SK-N-SH (cell line): ENCODE measurements at regions of chr2 and their contacts with region 1.

Region 1: GRCh38 chr2:84493514-84493913 is 22.8 kb upstream of the DNAH6 start:
- DNase-seq: no peak
- H3K4me3 ChIP-seq: no peak overlapping the region
- H3K27ac ChIP-seq: peak overlapping the region in 1 of 2 experiments; percentile 79; a peak in 2 of 4 replicates
- H3K4me1 ChIP-seq: peaks cover 0 to 8% of the 10 kb centered on the region in 2 experiments; a peak in 1 of 4 replicates
- H3K27me3 ChIP-seq: no peaks in the 10 kb centered on the region
- CTCF ChIP-seq: no peak
- EP300 ChIP-seq: peak in 1 of 2 experiments; percentile 57; a peak in 1 of 4 replicates
- RAD21 ChIP-seq: no peak

Region 2: GRCh38 chr2:84459018-84459943 is 34.2 kb before region 1 on chr2 and contains the start of gene SUCLG1:
- CTCF ChIA-PET with region 1: no interaction called
- POLR2A ChIA-PET with region 1: no interaction called
- DNase-seq: peak; percentile 91
- H3K4me3 ChIP-seq: peak within 1 kb of the TSS; percentile 80 to 98
- H3K27ac ChIP-seq: peak within 1 kb of the TSS; percentile 70 to 94
- H3K4me1 ChIP-seq: peaks cover 7 to 17% of the 10 kb centered on the region in 2 experiments; a peak in 3 of 4 replicates
- H3K27me3 ChIP-seq: no peaks in the 10 kb centered on the region
- CTCF ChIP-seq: no peak
- EP300 ChIP-seq: 0 out of 4 replicates have a peak, but pooled peaks of 1 of the 2 experiments have one; percentile 20
- RAD21 ChIP-seq: no peak
- polyA plus RNA-seq, gene SUCLG1: 32.7 and 39.7 TPM in 2 replicates

Region 3: DNA sequence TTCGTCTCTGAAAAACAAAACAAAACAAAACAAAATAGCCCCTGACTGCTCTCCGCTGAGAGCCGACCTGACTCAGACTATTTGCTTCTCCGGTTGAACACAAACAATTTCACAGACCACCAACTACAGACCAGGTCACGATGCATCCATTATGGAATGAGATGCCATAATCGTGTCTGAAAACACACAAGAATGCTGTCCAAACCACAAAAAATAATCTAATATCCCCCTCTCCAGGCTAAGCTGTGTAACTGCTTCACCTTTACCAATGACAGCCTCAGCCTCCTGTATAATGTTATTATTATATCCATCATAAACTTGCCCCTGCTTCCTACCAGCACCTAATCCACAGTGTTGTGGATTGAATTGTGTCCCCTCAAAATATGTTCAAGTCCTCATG is 137.5 kb after region 1 on chr2:
- CTCF ChIA-PET with region 1: interaction called, 22 read pairs
- POLR2A ChIA-PET with region 1: no interaction called
- DNase-seq: peak; percentile 36
- H3K4me3 ChIP-seq: peak overlapping the region in 1 of 2 experiments; percentile 28; a peak in 1 of 4 replicates
- H3K27ac ChIP-seq: no peak overlapping the region
- H3K4me1 ChIP-seq: no peaks in the 10 kb centered on the region
- H3K27me3 ChIP-seq: no peaks in the 10 kb centered on the region
- CTCF ChIP-seq: peak; percentile 75
- EP300 ChIP-seq: no peak
- RAD21 ChIP-seq: peak; percentile 84

Region 4: DNA sequence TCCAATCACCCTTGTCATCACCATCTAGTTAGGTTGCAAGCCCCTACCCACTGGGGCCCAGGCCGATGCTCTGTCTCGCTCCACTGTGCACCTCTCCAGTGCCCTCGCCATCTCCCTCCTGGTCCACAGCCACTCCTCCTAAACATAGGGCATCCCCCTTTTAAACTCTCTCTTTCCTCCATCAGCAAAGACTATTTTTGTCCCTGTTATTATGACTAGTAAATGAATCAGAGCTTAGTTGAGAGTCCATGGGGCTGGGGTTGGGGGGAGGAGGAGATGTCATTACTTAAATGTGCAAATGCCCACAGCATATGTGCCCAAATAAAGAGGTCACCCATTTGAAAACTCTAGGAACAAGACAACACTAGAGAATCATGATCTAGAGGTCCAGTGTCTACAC is 219.9 kb after region 1 on chr2:
- CTCF ChIA-PET with region 1: no interaction called
- POLR2A ChIA-PET with region 1: no interaction called
- DNase-seq: no peak
- H3K4me3 ChIP-seq: no peak overlapping the region
- H3K27ac ChIP-seq: no peak overlapping the region
- H3K4me1 ChIP-seq: no peaks in the 10 kb centered on the region
- H3K27me3 ChIP-seq: no peaks in the 10 kb centered on the region
- CTCF ChIP-seq: no peak
- EP300 ChIP-seq: no peak
- RAD21 ChIP-seq: no peak

Region 5: GRCh38 chr2:84881581-84882414 is 388.3 kb after region 1 on chr2:
- CTCF ChIA-PET with region 1: interaction called, 12 read pairs
- POLR2A ChIA-PET with region 1: no interaction called
- DNase-seq: peak; percentile 75
- H3K4me3 ChIP-seq: peak overlapping the region; percentile 44 to 66
- H3K27ac ChIP-seq: no peak overlapping the region
- H3K4me1 ChIP-seq: peaks cover 2 to 12% of the 10 kb centered on the region in 2 experiments; a peak in 3 of 4 replicates
- H3K27me3 ChIP-seq: peaks cover 16% of the 10 kb centered on the region
- CTCF ChIP-seq: peak; percentile 85
- EP300 ChIP-seq: no peak
- RAD21 ChIP-seq: peak; percentile 70